Kidney (tissue), 22 donors: ENCODE measurements at regions of chr4 and their contacts with region 1.

Region 1: GRCh38 chr4:69881173-69881773 is 21.3 kb upstream of the SULT1E1 start:
- DNase-seq: peak in 3 of 5 donors; percentile 14 to 61 (median 49)
- H3K4me3 ChIP-seq: no peak overlapping the region
- H3K27ac ChIP-seq: no peak overlapping the region
- H3K4me1 ChIP-seq: no peaks in the 10 kb centered on the region
- H3K27me3 ChIP-seq: no peaks in the 10 kb centered on the region
- CTCF ChIP-seq: peak; percentile 85

Region 2: DNA sequence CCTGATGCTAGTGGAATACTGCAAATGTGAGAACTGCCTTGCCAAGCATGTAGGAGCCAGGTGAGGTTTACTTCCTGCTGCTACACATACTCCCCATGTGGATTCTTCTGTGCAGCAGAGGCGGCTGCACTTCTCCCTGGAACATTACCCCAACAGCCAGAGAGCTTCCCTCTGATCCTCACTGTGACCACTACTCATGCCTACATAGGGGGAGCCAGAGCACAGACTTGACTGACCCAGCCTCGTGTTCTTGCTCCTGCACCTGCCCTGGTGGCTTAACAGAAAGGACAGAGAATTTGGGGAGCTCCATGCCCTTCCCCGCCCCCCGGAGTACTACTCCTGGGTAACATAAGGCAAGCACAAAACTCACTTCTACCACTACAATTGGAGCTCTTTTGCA is 280.2 kb before region 1 on chr4:
- intact Hi-C with region 1: no loop called
- DNase-seq: no peak
- H3K4me3 ChIP-seq: no peak overlapping the region
- H3K27ac ChIP-seq: no peak overlapping the region
- H3K4me1 ChIP-seq: no peaks in the 10 kb centered on the region
- H3K27me3 ChIP-seq: no peaks in the 10 kb centered on the region
- CTCF ChIP-seq: no peak

Region 3: GRCh38 chr4:69689599-69689998 is 191.7 kb before region 1 on chr4:
- intact Hi-C with region 1: loop called (anchors 10 kb)
- DNase-seq: peak in 2 of 5 donors; percentile 60 to 78
- H3K4me3 ChIP-seq: peak overlapping the region in 2 of 3 donors; percentile 32 to 52
- H3K27ac ChIP-seq: no peak overlapping the region
- H3K4me1 ChIP-seq: no peaks in the 10 kb centered on the region
- H3K27me3 ChIP-seq: no peaks in the 10 kb centered on the region
- CTCF ChIP-seq: peak; percentile 78